ENCODE measurements at regions of chr9 and their contacts with region 1.

Region 1: DNA sequence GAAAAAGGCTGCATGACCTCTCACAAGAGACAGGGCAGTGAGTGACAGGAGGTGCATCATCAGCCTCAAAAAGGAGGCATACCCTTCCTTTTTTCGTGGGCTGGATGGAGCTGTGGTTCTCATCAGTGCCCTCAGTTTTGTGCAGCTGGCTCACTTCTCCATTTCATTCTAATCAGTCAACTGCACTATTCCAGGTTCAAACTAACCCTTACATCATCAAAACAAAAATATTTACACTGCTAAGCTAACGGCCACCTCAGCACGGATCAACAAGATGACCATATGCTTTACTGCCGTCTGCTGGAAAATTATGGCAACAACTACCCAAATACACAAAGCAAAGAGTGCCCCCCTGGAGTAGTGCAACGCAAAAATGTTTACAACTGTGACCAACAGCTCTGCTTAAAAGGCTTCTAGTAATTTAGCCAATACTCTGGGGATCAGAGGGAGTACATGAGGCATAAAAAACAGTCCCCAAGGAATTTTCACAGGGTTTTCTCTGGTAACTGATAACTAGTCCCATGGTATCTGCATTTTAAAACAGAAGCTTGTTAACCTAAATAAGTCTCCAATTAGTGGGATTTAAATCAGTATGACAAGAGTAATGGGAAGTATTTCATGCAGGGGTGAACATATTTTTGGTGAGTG is 10.8 kb downstream of the KCNV2 start:
- DNase-seq: peak; percentile 76
- H3K4me3 ChIP-seq: no peak overlapping the region
- H3K27ac ChIP-seq: no peak overlapping the region
- H3K4me1 ChIP-seq: no peaks in the 10 kb centered on the region
- H3K27me3 ChIP-seq: no peaks in the 10 kb centered on the region
- CTCF ChIP-seq: peak; percentile 65 to 69
- POLR2A ChIP-seq: no peak

Region 2: DNA sequence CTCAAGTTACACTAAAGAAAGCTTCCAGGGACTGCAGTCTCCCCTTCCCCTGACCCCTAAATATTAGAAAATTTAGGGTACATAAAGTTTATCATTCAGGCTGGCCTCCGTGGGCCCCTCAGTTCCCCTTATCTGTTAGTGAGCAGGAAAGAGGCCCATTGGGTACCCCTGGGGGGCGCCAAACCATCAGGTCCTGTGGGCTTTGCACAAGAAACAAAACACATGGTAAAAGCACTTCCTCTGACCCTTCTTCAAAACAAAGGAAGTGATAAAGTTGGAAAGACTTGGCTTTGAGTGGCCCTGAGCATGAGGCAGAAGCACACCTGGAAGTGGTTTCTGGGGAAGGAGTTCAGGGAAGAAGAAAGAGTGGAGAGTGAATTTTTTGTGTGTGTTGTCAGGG is 500.0 kb before region 1 on chr9:
- CTCF ChIA-PET with region 1: interaction called, 8 read pairs
- POLR2A ChIA-PET with region 1: no interaction called
- dilution Hi-C with region 1: no loop called
- intact Hi-C with region 1: loop called (anchors 1 kb)
- DNase-seq: peak; percentile 18
- H3K4me3 ChIP-seq: no peak overlapping the region
- H3K27ac ChIP-seq: no peak overlapping the region
- H3K4me1 ChIP-seq: no peaks in the 10 kb centered on the region
- H3K27me3 ChIP-seq: no peaks in the 10 kb centered on the region
- CTCF ChIP-seq: peak; percentile 7 to 34
- POLR2A ChIP-seq: no peak

Region 3: DNA sequence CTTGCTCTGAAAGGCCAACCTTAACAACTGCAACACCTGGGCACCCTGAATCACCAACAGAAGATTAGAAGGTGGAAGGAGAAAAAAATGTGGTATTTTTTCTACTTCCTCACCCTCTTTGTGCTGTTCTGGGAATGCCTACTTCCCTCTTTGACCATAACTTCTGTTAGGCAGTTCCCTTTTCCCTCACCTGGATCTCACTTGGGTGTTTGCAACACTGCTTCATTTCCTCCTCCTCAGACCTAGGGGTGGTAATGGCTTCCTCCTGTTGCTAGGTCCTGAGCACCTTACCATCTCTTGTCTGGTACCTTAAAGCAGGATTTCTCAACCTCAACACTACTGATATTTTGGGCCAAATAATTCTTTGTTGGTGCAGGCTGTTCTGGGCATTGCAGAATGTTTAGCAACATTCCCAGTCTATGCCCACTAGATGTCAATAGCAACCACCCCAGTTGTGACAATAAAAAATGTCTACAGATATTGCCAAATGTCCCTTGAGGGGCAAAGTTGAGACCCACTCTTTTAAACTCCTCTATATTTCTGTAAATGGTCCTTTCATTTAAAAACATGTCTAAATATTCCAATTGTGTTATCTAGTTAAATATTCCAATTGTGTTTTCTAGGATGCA is 406.5 kb before region 1 on chr9:
- CTCF ChIA-PET with region 1: interaction called, 3 read pairs
- POLR2A ChIA-PET with region 1: no interaction called
- dilution Hi-C with region 1: no loop called
- intact Hi-C with region 1: loop called (anchors 5 kb)
- DNase-seq: no peak
- H3K4me3 ChIP-seq: no peak overlapping the region
- H3K27ac ChIP-seq: no peak overlapping the region
- H3K4me1 ChIP-seq: no peaks in the 10 kb centered on the region
- H3K27me3 ChIP-seq: no peaks in the 10 kb centered on the region
- CTCF ChIP-seq: no peak
- POLR2A ChIP-seq: no peak

Region 4: DNA sequence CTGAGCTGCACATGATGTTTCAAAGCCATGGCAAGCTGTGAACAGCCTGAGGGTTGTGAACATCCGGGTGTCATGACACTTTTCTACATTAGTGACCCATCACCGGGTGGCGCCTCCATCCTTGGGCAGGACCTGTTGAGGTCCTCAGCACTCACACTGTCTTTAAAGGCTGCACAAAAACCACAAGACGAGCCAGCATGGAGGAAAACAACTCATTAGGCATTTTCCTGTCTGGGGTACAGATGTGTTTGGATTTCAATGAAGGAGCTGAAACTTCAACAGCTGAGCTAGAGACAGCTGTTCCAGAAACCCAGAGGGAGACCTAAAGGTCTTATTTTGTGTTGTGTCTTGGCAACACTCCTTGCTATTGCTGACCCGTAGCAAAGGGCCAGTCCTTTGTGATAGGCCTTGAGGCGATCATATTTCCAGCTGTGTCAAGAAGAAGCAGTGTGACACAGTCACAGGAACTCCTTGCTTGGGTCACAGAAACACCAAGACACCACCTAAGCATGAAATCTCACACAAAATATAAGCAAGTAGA is 258.3 kb before region 1 on chr9:
- CTCF ChIA-PET with region 1: interaction called, 5 read pairs
- POLR2A ChIA-PET with region 1: no interaction called
- dilution Hi-C with region 1: no loop called
- intact Hi-C with region 1: loop called (anchors 1 kb)
- DNase-seq: peak; percentile 68
- H3K4me3 ChIP-seq: no peak overlapping the region
- H3K27ac ChIP-seq: no peak overlapping the region
- H3K4me1 ChIP-seq: peaks cover 4% of the 10 kb centered on the region
- H3K27me3 ChIP-seq: no peaks in the 10 kb centered on the region
- CTCF ChIP-seq: no peak
- POLR2A ChIP-seq: no peak

Region 5: GRCh38 chr9:2740616-2741015 is 12.5 kb after region 1 on chr9:
- CTCF ChIA-PET with region 1: interaction called, 10 read pairs
- POLR2A ChIA-PET with region 1: no interaction called
- dilution Hi-C with region 1: no loop called
- intact Hi-C with region 1: no loop called
- DNase-seq: no peak
- H3K4me3 ChIP-seq: no peak overlapping the region
- H3K27ac ChIP-seq: no peak overlapping the region
- H3K4me1 ChIP-seq: peaks cover 3% of the 10 kb centered on the region
- H3K27me3 ChIP-seq: no peaks in the 10 kb centered on the region
- CTCF ChIP-seq: no peak
- POLR2A ChIP-seq: no peak

Region 6: DNA sequence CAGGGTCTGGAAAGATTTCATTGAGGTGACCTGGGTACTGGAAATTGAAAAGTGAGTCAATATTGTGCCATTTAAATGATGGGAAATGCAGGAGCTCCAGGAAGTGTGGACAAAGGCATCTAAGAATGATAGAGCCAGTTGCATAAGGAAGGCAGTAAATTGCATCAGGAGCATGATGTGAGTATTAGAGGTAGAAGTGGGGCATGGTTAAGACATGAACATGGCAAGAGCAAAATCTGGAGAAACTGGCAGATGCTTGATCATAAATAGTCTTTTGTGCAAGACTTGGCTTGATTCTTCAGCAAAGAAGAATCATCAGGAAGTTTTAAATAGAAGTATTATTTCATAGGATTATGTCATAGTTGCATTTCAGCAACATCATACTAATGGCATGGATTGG is 273.2 kb after region 1 on chr9:
- CTCF ChIA-PET with region 1: no interaction called
- POLR2A ChIA-PET with region 1: no interaction called
- dilution Hi-C with region 1: no loop called
- intact Hi-C with region 1: no loop called
- DNase-seq: no peak
- H3K4me3 ChIP-seq: no peak overlapping the region
- H3K27ac ChIP-seq: no peak overlapping the region
- H3K4me1 ChIP-seq: no peaks in the 10 kb centered on the region
- H3K27me3 ChIP-seq: no peaks in the 10 kb centered on the region
- CTCF ChIP-seq: no peak
- POLR2A ChIP-seq: no peak